ENCODE measurements at regions of chr4 and their contacts with region 1.

Region 1: GRCh38 chr4:65089666-65090065 is 580.6 kb downstream of the EPHA5 start:
- DNase-seq: peak; percentile 83
- ATAC-seq: peak; percentile 90
- H3K4me3 ChIP-seq: no peak overlapping the region
- H3K27ac ChIP-seq: no peak overlapping the region
- H3K4me1 ChIP-seq: 0 out of 2 replicates have a peak, but pooled peaks cover 12% of the 10 kb centered on the region
- H3K27me3 ChIP-seq: no peaks in the 10 kb centered on the region
- CTCF ChIP-seq: peak; percentile 79

Region 2: DNA sequence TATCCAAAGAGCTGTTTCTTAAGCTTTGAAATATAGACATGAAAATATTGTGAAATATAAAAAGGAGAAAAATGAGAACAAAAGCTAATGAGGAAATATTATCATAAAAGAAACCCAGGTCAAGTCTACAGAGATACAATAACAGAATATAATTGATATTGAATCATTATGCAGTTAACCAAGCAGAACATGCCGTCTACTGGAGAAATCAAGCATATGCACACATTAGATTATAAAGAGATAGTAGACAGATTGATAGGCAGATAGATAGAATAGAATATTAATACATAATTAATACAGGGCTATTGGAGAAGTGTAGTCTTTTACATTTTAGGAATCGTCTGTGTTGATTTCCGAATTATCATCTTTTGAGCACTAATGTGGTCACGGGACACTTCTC is 372.1 kb after region 1 on chr4:
- CTCF ChIA-PET with region 1: no interaction called
- POLR2A ChIA-PET with region 1: no interaction called
- intact Hi-C with region 1: loop called (anchors 2 kb)
- DNase-seq: peak; percentile 32
- ATAC-seq: no peak; the same call in 1 of the 2 replicates
- H3K4me3 ChIP-seq: no peak overlapping the region
- H3K27ac ChIP-seq: no peak overlapping the region
- H3K4me1 ChIP-seq: peaks cover 7% of the 10 kb centered on the region
- H3K27me3 ChIP-seq: no peaks in the 10 kb centered on the region
- CTCF ChIP-seq: peak; percentile 64